HEK293T (cell line): ENCODE measurements at regions of chr6 and their contacts with region 1.

Region 1: DNA sequence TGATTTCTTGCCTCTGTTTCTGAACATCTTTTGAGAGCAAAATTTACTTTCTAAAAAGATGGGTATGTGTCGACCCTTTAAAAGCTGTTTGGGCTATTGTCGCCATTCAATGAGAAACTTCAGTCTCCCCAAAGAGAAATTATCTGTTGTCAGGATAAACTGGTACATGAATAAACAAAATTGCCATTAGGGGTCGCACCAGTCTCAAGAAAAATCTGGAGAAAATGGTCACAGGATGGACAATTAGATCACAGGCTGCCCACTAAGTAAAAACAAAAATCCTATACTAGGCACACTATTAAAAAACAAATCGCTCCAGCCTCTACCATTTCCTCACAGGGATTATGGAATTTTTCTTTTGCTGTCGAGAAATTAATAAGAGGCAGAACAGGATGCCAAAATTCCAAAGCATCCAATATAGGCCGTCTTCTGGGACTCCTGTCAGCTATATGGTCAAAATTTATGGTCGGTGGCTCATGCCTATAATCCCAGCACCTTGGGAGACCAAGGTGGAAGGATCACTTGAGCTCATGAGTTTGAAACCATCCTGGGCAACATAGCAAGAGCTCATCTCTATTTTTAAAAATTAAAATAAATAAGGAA is 5.5 kb upstream of the HLA-E start:
- DNase-seq: no peak

Region 2: GRCh38 chr6:30533460-30534294 is 49.9 kb after region 1 on chr6:
- CTCF ChIA-PET with region 1: interaction called, 35 read pairs
- POLR2A ChIA-PET with region 1: no interaction called
- DNase-seq: no peak

Region 3: GRCh38 chr6:30541515-30542403 is 58.0 kb after region 1 on chr6:
- CTCF ChIA-PET with region 1: interaction called, 10 read pairs
- POLR2A ChIA-PET with region 1: interaction called, 4 read pairs
- DNase-seq: peak; percentile 74

Region 4: GRCh38 chr6:30600451-30600961 is 116.7 kb after region 1 on chr6:
- CTCF ChIA-PET with region 1: interaction called, 12 read pairs
- POLR2A ChIA-PET with region 1: no interaction called
- DNase-seq: no peak